Right cardiac atrium (tissue), 5 donors: ENCODE measurements at regions of chr10 and their contacts with region 1.

Region 1: DNA sequence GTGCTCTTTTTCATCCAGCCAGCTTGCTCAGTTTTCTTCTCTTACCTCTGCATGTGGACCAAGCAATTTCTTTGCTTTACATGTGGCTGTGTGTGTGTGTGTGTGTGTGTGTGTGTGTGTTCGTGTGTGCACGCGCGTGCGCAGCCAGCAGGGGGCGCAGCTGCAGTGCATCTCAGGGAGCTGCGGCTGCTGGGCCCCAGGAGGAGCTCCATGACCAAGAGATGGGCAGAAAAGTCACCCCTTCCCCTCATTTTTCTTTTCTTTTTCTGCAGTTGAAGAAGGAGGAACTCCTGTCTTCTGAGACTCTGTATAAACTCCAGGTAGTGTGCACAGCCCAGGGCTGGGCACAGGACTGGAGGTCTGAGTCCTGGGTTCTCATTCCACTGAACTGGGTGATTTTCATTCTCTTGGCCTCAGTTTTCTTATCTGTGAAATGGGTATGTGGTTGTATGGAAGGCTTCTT is 41.8 kb downstream of the BLNK start:
- DNase-seq: peak; percentile 77 to 90 (median 89)
- ATAC-seq: peak; percentile 48 to 68
- H3K4me3 ChIP-seq: no peak overlapping the region
- H3K27ac ChIP-seq: no peak overlapping the region
- H3K4me1 ChIP-seq: no peaks in the 10 kb centered on the region
- H3K27me3 ChIP-seq: no peaks in the 10 kb centered on the region

Region 2: DNA sequence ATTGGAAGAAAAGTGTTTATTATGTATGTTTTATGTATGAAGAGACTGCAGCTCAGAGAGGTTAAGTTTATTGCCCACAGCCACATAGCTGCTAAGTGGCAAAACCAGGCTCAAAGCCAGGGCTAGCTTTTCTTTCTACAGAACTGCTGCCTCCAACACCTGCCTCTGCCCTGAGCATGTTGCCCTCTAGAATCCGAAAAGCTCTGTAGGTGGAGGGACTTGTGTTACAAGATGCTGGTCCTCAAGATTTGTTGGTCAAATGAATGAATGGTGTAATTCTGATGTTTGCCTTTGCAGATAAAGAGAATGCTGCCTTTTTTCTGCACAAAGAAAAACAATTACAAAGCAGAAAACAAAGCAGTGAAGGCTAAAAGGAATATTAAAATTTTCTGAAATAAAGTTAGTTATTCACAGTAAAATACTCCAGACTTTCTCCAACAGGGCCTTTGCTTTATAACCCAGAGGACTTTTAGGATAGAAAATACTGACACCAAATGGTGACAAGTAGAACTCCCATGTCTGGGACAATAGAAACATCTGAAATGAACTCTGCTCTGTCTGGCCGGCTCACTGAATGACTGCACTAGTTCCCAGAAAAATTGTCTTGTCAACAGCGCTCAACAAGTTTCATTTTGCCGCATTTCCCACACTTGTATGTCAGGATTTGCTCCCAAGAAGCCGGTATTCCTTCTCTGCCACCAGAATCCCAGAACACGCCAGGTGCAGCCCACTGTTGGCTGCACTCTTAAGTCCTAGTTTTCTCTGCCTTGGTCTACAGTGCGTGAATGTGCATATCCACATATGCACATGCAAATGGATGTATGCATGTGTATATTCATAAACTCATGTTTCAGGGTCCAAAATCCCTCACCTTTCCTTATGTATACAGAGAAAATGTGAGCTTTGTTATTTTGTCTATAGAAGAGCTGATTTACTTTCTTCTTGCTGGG is 63.6 kb after region 1 on chr10:
- intact Hi-C with region 1: loop called in 3 of 4 experiments (anchors 5 to 10 kb)
- DNase-seq: no peak
- ATAC-seq: peak; percentile 64 to 79
- H3K4me3 ChIP-seq: no peak overlapping the region
- H3K27ac ChIP-seq: no peak overlapping the region
- H3K4me1 ChIP-seq: no peaks in the 10 kb centered on the region
- H3K27me3 ChIP-seq: no peaks in the 10 kb centered on the region